Activated CD4-positive, alpha-beta memory T cell treated with anti-CD3 and anti-CD28 coated beads for 36 hours (primary cell): ENCODE measurements at regions of chr11 and their contacts with region 1.

Region 1: DNA sequence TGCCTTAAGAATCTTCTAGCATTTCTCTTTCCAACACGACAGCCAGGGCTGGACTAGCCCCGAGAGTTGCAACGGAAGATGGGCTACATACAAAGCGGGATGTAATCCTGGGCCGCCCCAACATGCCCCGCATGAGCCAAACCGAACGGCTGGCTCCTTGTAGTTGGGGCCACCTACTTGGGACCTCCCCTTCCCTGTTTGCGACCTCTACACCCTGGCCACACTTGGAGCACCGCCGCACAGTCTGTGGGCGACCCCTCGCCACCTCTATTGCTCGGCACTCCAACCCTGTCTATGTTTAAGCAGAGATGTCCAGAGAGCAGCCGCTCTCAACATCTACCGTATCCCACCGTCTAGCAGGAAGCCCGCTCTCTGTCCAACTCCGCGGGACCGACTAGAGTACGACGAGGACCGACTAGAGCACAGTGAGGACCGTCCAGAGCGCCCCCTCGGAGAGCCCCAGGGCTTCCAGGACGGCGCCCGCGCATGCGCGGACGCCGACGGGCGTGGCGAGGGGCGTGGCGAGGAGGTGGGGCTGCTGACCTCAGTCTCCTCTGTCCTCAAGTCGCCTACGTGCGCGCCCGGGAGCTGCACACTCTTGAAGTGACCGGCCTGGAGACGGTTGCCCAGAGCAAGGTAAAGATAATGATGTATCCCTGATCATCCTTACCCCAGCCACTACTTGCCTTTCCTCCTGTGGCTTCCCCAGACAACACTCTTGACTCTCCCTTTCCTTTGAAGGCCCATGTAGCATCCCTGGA is 32.3 kb downstream of the NEAT1 start:
- DNase-seq: peak; percentile 92
- H3K4me3 Mint-ChIP-seq: peak overlapping the region; percentile 91
- H3K27ac Mint-ChIP-seq: peak overlapping the region; percentile 79
- H3K4me1 Mint-ChIP-seq: peaks cover 41% of the 10 kb centered on the region
- H3K27me3 Mint-ChIP-seq: no peaks in the 10 kb centered on the region

Region 2: DNA sequence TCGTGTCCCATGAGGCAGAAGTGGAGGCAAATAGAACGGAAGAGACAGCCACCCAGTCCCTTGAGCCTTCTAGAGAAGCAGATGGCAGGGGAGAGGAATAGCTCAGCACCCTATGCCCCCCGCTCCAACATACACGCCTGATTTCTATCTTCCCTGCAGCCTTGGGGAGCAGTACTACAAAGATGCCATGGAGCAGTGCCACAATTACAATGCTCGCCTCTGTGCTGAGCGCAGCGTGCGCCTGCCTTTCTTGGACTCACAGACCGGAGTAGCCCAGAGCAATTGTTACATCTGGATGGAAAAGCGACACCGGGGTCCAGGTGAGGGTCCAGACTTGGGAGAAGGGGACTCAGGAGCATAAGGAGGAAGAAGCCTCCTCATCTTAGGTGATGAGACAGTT is 114.7 kb before region 1 on chr11:
- CTCF ChIA-PET with region 1: no interaction called
- POLR2A ChIA-PET with region 1: no interaction called
- intact Hi-C with region 1: no loop called
- DNase-seq: no peak
- H3K4me3 Mint-ChIP-seq: no peak overlapping the region
- H3K27ac Mint-ChIP-seq: no peak overlapping the region
- H3K4me1 Mint-ChIP-seq: peaks cover 29% of the 10 kb centered on the region
- H3K27me3 Mint-ChIP-seq: no peaks in the 10 kb centered on the region

Region 3: DNA sequence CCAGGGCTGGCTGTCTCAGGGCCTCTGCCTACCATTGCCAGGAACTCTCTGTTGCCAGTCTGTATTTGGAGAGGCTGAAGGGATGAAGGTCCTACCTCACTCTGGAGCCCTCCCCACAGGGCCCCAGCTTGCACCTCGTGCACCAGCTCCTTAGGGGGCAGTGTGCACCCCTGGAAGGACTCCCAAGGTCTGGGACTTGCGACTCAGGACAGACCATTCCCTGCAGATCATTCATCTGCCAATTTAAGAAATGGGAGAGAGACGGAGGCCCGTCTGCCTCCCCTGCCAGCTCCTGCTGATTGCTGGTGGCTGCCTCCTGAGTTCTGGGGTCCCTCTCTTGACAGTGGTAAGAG is 16.5 kb after region 1 on chr11:
- CTCF ChIA-PET with region 1: interaction called, 5 read pairs
- POLR2A ChIA-PET with region 1: interaction called, 3 read pairs
- intact Hi-C with region 1: loop called (anchors 2 kb)
- DNase-seq: no peak
- H3K4me3 Mint-ChIP-seq: peak overlapping the region; percentile 67
- H3K27ac Mint-ChIP-seq: peak overlapping the region; percentile 99
- H3K4me1 Mint-ChIP-seq: peaks cover 29% of the 10 kb centered on the region
- H3K27me3 Mint-ChIP-seq: no peaks in the 10 kb centered on the region